Right cardiac atrium (tissue), 5 donors: ENCODE measurements at regions of chr3 and their contacts with region 1.

Region 1: DNA sequence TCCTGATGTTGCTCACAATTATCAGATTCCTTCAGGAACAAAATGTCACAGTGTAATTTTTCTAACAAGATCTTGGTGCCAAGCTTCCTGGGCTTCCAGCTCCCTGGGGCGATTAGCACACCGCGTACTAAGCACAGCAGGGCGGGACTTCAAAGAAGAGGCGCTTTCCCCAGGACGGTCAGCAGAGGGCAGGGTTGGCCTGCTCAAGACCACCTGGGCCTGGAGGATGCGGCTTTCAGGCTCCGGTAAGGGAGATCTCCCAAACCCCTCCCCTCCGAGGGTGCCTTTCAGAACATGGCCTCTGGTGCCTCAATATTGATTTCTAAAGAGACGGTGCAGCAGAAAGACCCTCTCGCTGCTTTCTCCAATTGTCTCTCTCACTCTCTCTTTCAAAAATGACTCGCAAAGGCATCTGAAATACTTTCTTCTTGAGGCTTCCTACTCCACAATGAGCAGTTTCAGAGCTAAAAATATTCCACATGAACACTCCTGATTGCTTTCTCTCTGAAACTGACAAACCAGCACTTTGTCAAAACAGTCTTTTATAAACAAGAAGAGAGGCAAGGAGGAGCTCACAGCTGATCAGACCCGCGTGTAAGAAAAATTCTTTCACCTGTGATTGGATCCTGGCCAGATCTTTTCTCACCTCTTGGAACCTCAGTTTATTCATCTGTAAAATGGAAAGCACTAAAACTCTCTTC is 154.0 kb downstream of the ADAMTS9 start:
- DNase-seq: peak; percentile 85 to 95 (median 92)
- ATAC-seq: peak; percentile 94 to 97
- H3K4me3 ChIP-seq: no peak overlapping the region
- H3K27ac ChIP-seq: no peak overlapping the region
- H3K4me1 ChIP-seq: no peaks in the 10 kb centered on the region
- H3K27me3 ChIP-seq: no peaks in the 10 kb centered on the region

Region 2: GRCh38 chr3:64445321-64446300 is 88.2 kb before region 1 on chr3:
- intact Hi-C with region 1: no loop called
- DNase-seq: peak; percentile 37 to 77 (median 70)
- ATAC-seq: peak; percentile 72 to 76
- H3K4me3 ChIP-seq: peak overlapping the region; percentile 53
- H3K27ac ChIP-seq: no peak overlapping the region
- H3K4me1 ChIP-seq: peaks cover 3% of the 10 kb centered on the region
- H3K27me3 ChIP-seq: no peaks in the 10 kb centered on the region

Region 3: GRCh38 chr3:65170390-65171042 is 636.7 kb after region 1 on chr3:
- intact Hi-C with region 1: loop called in 2 of 4 experiments (anchors 5 to 10 kb)
- DNase-seq: peak; percentile 89 to 94 (median 91)
- ATAC-seq: peak; percentile 85 to 95
- H3K4me3 ChIP-seq: no peak overlapping the region
- H3K27ac ChIP-seq: peak overlapping the region; percentile 68
- H3K4me1 ChIP-seq: peaks cover 2% of the 10 kb centered on the region
- H3K27me3 ChIP-seq: no peaks in the 10 kb centered on the region

Region 4: DNA sequence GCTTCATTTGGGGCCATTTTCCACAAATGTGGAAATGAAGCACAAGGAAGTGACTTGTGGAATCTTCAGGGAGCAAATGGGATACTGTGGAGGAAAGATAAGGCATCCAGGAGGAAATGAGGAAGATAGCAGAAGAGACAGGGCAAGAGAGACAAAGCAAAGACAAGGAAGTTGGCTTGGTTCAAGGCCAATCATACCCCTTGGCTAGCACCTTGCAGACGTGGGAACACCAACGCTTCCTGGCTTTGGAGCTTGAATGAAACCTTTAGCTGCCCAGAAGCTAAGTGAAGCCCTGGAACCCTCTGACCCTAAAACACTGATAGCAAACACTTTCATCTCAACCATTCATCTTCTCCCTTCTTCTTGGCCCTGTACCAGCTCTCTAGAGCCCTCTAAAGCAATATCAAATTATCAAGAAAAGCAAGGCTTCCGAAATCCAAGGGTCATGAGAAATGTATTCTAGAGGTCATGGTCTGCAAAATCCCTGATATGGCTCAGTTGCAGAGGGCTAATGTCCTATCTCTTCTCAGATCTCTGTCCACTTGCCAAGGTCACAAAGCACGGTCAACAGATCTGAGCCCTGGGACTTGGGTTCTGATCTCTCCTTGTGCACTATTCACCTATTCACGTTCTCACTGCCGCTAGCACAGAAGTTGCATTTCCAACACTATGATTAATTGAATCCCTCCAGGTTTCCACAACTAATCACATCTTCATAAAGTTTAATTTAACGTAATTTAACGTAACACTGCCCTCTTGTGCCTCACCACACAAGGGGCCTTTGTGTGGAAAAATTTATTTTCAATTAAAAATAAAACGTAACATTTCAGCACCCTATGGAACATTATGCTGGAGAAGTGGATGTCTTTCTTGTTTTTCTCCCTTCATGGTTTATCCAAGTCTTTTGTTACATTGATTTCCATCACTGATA is 711.6 kb after region 1 on chr3:
- intact Hi-C with region 1: loop called in 2 of 4 experiments (anchors 5 kb)
- DNase-seq: no peak
- ATAC-seq: peak; percentile 11 to 68
- H3K4me3 ChIP-seq: no peak overlapping the region
- H3K27ac ChIP-seq: no peak overlapping the region
- H3K4me1 ChIP-seq: no peaks in the 10 kb centered on the region
- H3K27me3 ChIP-seq: no peaks in the 10 kb centered on the region